ENCODE measurements at regions of chr3 and their contacts with region 1.

Region 1: GRCh38 chr3:141959921-141960554 is 83.6 kb downstream of the ATP1B3 start:
- DNase-seq: no peak
- H3K4me3 ChIP-seq: no peak overlapping the region
- H3K27ac ChIP-seq: no peak overlapping the region
- H3K4me1 ChIP-seq: no peaks in the 10 kb centered on the region
- CTCF ChIP-seq: no peak

Region 2: GRCh38 chr3:140995881-140996280 is 964.2 kb before region 1 on chr3:
- CTCF ChIA-PET with region 1: no interaction called
- POLR2A ChIA-PET with region 1: no interaction called
- intact Hi-C with region 1: no loop called
- DNase-seq: no peak
- H3K4me3 ChIP-seq: no peak overlapping the region
- H3K27ac ChIP-seq: no peak overlapping the region
- H3K4me1 ChIP-seq: no peaks in the 10 kb centered on the region
- CTCF ChIP-seq: no peak

Region 3: DNA sequence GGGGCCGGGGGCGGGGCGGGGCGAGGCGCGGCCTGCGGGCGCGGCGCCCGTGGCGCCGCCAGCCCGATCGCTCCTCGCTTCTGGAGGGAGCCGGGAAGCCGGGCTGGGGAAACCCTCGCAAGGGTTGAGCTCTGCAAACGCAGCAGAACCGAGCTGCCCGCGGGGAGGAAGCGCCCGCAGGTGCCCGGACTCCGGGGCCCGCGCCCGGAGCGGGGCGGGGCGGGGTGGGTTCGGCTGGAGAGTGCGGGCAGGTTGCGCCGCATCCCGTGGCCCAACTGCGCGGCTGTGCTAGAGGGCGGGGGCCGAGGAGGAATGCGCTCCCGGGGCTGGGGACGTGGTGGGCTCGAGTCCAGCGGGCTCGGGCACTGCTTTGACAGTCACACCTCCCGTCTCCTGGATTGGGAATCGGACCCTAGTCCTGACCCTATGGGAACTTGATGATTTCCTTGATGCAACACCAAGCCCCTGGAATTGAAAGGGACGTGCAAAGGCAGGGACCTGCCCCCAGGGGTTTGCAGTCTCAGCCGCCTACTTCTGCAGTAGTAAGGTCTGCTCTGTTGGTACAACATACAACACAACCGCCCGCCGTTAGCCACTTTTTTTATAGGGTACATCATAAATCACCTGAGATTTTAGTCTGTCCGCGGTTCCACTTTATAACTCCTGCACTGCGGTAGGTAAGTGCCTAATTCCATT is 557.4 kb before region 1 on chr3:
- CTCF ChIA-PET with region 1: no interaction called
- POLR2A ChIA-PET with region 1: no interaction called
- intact Hi-C with region 1: no loop called
- DNase-seq: no peak
- H3K4me3 ChIP-seq: peak overlapping the region; percentile 58
- H3K27ac ChIP-seq: no peak overlapping the region
- H3K4me1 ChIP-seq: no peaks in the 10 kb centered on the region
- CTCF ChIP-seq: no peak

Region 4: DNA sequence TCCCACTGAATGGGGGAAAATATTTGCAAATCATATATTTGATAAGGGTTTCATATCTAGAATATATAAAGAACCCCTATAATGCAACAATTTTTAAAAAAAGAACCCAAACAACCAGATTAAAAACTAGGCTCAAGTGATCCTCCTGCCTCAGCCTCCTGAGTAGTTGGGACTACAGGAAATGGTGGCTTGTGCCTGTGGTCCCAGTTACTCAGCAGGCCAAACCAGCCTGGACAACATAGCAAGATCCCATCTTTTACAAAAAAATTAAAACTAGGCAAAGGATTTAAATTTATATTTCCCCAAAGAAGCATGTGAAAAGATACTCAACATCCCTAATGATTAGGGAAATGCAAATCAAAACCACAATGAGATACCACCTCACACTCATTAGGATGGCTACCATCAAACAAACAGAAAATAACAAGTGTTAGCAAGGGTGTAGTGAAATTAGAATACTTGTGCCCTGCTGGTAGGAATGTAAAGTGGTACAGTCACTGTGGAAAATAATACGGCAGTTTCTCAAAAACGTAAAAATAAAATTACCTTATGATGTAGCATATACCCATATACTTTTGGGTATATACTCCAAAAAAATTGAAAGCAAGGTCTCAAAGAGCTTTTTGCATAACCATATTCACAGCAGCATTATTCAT is 169.6 kb after region 1 on chr3:
- CTCF ChIA-PET with region 1: no interaction called
- POLR2A ChIA-PET with region 1: interaction called, 4 read pairs
- intact Hi-C with region 1: loop called (anchors 5 kb)
- DNase-seq: no peak
- H3K4me3 ChIP-seq: no peak overlapping the region
- H3K27ac ChIP-seq: peak overlapping the region; percentile 29
- H3K4me1 ChIP-seq: peaks cover 32% of the 10 kb centered on the region
- CTCF ChIP-seq: no peak

Region 5: DNA sequence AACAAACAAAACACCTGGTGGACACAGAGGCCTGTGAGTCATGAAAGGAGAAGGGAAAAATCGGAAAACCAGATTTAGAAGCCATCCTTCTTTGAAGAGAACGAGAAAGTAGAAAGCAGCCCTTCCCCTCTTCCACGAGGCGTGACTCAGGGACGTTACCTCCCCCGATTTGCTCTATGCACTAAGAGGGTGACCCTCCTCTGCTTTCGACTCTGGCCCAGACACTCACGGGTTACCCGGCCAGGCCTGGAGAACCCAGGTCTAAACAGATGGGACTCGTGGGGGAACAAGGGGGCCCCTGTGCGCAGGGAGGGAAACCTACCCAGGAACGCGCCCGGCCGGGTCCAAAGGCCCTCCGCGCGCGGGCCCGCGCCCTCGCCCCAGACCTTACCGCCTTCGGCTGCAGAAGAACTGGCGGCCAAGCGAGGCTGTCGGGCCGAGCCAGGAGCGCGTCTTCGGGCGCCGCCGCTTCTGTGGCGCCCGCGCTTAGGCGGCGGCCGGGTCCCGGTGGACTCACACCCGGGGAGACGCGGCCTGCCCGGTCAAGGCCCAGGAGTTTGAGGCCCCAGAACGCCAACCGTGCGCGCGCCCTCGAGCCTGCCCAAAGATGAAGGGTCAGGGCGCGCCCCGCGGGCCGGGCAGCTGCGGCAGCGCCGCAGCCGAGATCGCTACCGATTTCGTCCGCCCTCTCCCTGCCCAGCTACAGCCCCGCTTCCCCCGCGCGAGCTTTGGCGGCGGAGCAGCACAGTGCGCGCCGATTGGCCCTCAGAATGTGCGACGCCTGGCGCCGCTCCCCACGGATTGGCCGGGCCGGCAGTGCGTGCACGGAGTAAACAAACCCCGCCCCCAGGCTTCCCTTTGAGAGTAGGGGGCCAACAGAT is 189.0 kb after region 1 on chr3 and contains the start of gene TFDP2:
- CTCF ChIA-PET with region 1: no interaction called
- POLR2A ChIA-PET with region 1: no interaction called
- intact Hi-C with region 1: loop called (anchors 5 kb)
- DNase-seq: peak; percentile 93
- H3K4me3 ChIP-seq: peak within 1 kb of the TSS; percentile 77
- H3K27ac ChIP-seq: peak within 1 kb of the TSS; percentile 71
- H3K4me1 ChIP-seq: peaks cover 30% of the 10 kb centered on the region
- CTCF ChIP-seq: 0 out of 2 replicates have a peak, but pooled peaks have one; percentile 16
- total RNA-seq, gene TFDP2: 169 and 201 TPM in 2 replicates

Region 6: DNA sequence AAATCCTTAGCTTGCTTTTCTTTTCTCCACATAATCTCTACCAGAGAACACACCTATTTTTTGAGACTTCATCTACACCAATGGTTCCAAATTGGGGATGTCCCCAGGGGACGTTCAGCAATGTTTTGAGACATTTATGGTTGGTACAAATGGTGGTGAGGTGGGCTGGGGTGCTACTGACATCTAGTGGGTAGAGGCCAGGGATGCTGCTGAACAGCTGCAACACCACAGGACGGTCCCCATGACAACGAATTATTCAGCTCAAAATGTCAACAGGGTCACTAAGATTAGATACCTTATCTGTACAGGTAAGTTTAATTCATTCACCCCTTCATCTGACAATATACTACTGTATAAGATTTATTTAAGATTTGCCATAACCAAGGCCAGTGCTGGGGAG is 251.0 kb after region 1 on chr3:
- CTCF ChIA-PET with region 1: no interaction called
- POLR2A ChIA-PET with region 1: no interaction called
- intact Hi-C with region 1: loop called (anchors 2 kb)
- DNase-seq: peak; percentile 80
- H3K4me3 ChIP-seq: no peak overlapping the region
- H3K27ac ChIP-seq: no peak overlapping the region
- H3K4me1 ChIP-seq: peaks cover 11% of the 10 kb centered on the region
- CTCF ChIP-seq: peak; percentile 87